ENCODE measurements at regions of chr10 and their contacts with region 1.

Region 1: GRCh38 chr10:50624866-50625692 is 1.3 kb upstream of the SGMS1 start:
- DNase-seq: peak; percentile 86
- H3K4me3 ChIP-seq: peak overlapping the region; percentile 69 to 98 (median 85)
- H3K27ac ChIP-seq: peak overlapping the region; percentile 97 to 99 (median 99)
- H3K4me1 ChIP-seq: peaks cover 3 to 34% (median 25%) of the 10 kb centered on the region in 4 donors
- H3K27me3 ChIP-seq: no peaks in the 10 kb centered on the region
- CTCF ChIP-seq: peak; percentile 52 to 78 (median 69)
- EP300 ChIP-seq: no peak
- POLR2A ChIP-seq: no peak

Region 2: DNA sequence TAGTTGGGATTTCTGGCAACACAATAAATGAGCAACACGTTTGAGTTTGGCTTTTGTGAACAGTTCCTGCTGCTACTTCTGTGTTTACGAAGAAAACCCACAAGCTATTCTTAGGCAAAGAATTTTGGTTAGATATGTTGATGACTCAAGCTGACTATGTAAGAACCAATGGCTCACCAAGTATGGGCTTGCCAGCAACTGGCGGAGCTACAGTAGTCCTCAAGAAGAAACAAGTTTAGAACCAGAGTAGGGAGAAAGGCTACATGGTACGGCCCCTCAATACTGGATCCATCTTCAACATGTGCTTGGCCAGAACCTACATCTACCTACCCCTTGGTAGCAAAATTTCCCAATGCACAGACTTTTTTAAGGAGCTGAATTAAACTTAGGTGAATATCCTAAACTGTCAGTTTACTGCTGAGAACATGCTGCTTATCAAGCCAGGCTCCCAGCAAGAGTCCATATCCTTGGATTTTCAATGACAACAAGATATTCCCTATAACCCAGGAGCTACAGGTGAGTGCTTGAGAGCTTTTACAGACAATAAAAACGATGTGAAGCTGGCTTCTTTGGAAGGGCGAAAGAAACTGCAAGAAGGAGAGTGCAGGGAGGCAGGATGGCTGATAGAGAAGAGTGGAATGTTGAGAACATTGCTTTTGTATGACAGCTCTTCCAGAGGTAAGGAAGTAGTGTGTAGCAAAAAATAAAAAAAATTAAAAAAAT is 299.5 kb before region 1 on chr10:
- intact Hi-C with region 1: loop called (anchors 2 kb)
- DNase-seq: peak; percentile 86
- H3K4me3 ChIP-seq: no peak overlapping the region
- H3K27ac ChIP-seq: peak overlapping the region; percentile 69 to 87 (median 78)
- H3K4me1 ChIP-seq: peaks cover 0 to 49% (median 39%) of the 10 kb centered on the region in 4 donors
- H3K27me3 ChIP-seq: no peaks in the 10 kb centered on the region
- CTCF ChIP-seq: no peak
- EP300 ChIP-seq: peak in 1 of 4 donors; percentile 27
- POLR2A ChIP-seq: no peak

Region 3: DNA sequence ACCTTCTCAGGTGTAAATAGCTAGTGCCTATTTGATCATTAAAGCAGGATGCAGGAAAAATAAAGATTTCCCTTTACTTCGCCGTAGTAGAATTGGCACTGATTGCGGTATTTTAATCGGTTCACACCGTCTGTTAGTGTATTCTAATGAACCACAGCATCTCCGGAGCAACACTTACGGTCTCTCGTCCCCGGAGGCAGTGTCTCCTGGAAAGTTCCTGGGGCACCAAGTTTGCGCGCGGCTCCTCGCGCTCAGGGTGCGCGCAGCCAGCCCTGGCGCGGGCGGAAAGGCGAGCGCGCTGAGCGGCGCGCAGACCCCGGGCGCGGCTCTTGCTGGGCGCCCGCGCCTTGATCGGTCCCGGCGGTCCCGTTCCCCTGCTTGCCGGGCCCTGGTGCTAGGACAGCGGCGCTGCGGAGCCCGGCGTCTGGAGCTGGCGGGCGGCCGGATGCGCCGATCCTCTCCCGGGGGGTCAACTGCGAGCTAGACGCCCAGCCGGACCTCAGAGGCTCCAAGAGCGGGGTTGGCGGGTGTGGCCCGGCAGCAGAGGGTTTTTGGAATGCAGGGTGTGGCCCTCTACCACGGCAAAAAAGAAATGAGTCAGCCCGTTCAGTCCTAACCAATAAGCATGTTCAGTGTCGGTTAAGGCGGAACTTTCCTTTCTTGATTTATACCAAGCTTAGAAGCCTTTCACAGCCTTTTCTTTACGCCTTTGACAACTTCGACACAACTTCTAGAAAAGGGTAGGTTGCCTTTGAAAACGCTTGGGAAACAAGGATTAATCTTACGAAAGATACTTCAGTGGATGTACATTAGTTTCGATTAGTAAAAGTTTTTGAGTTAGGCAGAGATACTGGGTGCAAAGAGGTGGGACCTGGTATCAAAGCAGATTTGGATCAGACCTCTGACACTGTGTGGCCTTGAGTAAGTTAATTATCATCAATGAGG is 206.9 kb before region 1 on chr10:
- intact Hi-C with region 1: loop called (anchors 2 kb)
- DNase-seq: peak; percentile 81
- H3K4me3 ChIP-seq: peak overlapping the region; percentile 50 to 75 (median 70)
- H3K27ac ChIP-seq: peak overlapping the region; percentile 74 to 83 (median 79)
- H3K4me1 ChIP-seq: peaks cover 0 to 41% (median 20%) of the 10 kb centered on the region in 4 donors
- H3K27me3 ChIP-seq: no peaks in the 10 kb centered on the region
- CTCF ChIP-seq: no peak
- EP300 ChIP-seq: no peak
- POLR2A ChIP-seq: no peak

Region 4: DNA sequence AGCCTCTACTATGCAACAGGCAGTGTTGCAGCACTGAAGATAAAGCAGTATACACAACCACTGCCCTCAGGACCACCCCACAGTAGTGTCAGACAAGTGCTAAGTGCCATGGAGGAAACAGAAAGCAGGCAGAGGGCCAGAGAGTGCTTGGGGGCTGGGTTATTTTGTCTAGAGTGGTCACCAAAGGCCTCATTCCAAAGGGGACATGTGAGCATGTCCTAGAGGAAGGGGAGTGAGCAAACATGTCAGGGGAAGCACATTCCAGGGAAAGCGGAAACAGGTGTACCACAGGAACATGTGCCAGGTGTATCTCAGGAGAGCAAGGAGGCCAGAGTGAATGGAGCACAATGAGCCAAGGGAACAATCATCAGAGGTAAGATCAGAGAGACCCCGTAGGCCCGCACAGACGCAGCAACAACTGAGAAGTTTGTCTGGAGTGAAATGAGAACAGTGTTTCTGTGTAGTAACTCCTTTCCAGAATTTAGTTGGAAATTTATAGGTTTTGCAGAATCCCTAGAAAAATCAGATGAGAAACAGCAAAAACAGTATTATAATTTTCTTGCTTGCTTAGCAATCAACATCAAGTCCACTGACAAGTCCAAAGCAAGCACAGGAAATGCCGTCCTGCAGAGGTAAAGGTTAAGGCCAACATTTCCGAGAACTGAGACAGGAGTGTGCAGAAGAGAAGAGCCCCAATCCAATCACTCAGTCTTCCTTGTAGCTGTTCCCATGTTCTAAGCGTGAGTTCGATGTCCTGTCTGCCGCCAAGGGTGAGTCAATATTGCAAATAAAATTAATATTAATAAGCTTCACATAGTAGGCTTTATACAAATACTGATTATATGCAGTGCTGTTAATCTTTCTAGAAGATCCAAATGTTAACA is 68.6 kb before region 1 on chr10:
- intact Hi-C with region 1: loop called (anchors 2 kb)
- DNase-seq: no peak
- H3K4me3 ChIP-seq: no peak overlapping the region
- H3K27ac ChIP-seq: peak overlapping the region in 3 of 4 donors; percentile 60 to 66 (median 61)
- H3K4me1 ChIP-seq: peaks cover 0 to 84% (median 62%) of the 10 kb centered on the region in 4 donors
- H3K27me3 ChIP-seq: no peaks in the 10 kb centered on the region
- CTCF ChIP-seq: no peak
- EP300 ChIP-seq: no peak
- POLR2A ChIP-seq: no peak

Region 5: GRCh38 chr10:50605269-50606263 is 19.5 kb before region 1 on chr10:
- intact Hi-C with region 1: loop called (anchors 2 kb)
- DNase-seq: peak; percentile 81
- H3K4me3 ChIP-seq: no peak overlapping the region
- H3K27ac ChIP-seq: peak overlapping the region; percentile 55 to 73 (median 70)
- H3K4me1 ChIP-seq: peaks cover 0 to 75% (median 61%) of the 10 kb centered on the region in 4 donors
- H3K27me3 ChIP-seq: no peaks in the 10 kb centered on the region
- CTCF ChIP-seq: no peak
- EP300 ChIP-seq: no peak
- POLR2A ChIP-seq: no peak

Measured in sigmoid colon (tissue), 7 donors.